Activated T-helper 1 cell treated with anti-CD3 and anti-CD28 coated beads, Interleukin-12 subunit alpha, Interleukin-12 subunit beta, Interleukin-2, Interleukin-4 antibody, amounts not matched to agents 30 ng/mL and 10 ng/mL and 1 ng/mL, durations not matched to agents 14 hours and 24 hours and 36 hours (primary cell): ENCODE measurements at regions of chr11 and their contacts with region 1.

Region 1: GRCh38 chr11:65711785-65712632 is at the start of gene KAT5:
- DNase-seq: peak; percentile 98
- H3K4me3 Mint-ChIP-seq: peak within 1 kb of the TSS; percentile 96
- H3K27ac Mint-ChIP-seq: peak within 1 kb of the TSS; percentile 98
- H3K4me1 Mint-ChIP-seq: peaks cover 29% of the 10 kb centered on the region
- H3K27me3 Mint-ChIP-seq: no peaks in the 10 kb centered on the region
- total RNA-seq, gene KAT5: 68.1 and 75.0 TPM in 2 replicates

Region 2: GRCh38 chr11:65069217-65069616 is 642.8 kb before region 1 on chr11:
- intact Hi-C with region 1: no loop called
- DNase-seq: no peak
- H3K4me3 Mint-ChIP-seq: no peak overlapping the region
- H3K27ac Mint-ChIP-seq: no peak overlapping the region
- H3K4me1 Mint-ChIP-seq: no peaks in the 10 kb centered on the region
- H3K27me3 Mint-ChIP-seq: no peaks in the 10 kb centered on the region

Region 3: GRCh38 chr11:65606876-65607613 is 105.0 kb before region 1 on chr11:
- intact Hi-C with region 1: no loop called
- DNase-seq: no peak
- H3K4me3 Mint-ChIP-seq: no peak overlapping the region
- H3K27ac Mint-ChIP-seq: peak overlapping the region; percentile 34
- H3K4me1 Mint-ChIP-seq: peaks cover 29% of the 10 kb centered on the region
- H3K27me3 Mint-ChIP-seq: no peaks in the 10 kb centered on the region

Region 4: DNA sequence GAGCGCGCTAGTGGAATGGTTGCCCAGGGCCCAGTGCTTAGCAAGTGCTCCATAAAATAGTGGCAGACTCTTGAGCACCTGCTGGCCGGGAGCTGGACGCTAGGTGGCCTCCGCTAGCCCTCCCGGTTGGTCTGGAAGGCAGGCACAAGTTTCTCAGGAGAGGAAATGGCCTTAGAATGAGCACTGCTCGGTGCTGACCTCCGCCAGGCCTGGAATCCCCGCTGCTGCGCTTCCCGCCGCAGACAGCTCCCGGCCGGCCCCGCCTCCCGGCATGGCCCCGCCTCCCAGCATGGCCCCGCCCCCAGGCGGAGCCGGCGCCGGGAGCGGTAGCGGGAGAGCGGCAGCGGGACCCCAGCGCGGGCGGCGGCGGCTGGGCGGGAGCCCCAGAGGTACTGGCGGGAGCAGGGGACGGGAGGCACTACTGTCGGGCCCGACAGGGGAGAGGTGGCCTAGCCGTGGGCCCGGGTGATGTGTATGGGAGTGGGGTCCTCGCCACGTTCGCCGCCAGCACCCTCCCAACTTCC is 74.2 kb before region 1 on chr11 and contains the start of gene SIPA1:
- intact Hi-C with region 1: loop called (anchors 2 kb)
- DNase-seq: peak; percentile 74
- H3K4me3 Mint-ChIP-seq: peak within 1 kb of the TSS; percentile 82
- H3K27ac Mint-ChIP-seq: peak within 1 kb of the TSS; percentile 83
- H3K4me1 Mint-ChIP-seq: peaks cover 40% of the 10 kb centered on the region
- H3K27me3 Mint-ChIP-seq: no peaks in the 10 kb centered on the region
- total RNA-seq, gene SIPA1: 117 and 130 TPM in 2 replicates

Region 5: DNA sequence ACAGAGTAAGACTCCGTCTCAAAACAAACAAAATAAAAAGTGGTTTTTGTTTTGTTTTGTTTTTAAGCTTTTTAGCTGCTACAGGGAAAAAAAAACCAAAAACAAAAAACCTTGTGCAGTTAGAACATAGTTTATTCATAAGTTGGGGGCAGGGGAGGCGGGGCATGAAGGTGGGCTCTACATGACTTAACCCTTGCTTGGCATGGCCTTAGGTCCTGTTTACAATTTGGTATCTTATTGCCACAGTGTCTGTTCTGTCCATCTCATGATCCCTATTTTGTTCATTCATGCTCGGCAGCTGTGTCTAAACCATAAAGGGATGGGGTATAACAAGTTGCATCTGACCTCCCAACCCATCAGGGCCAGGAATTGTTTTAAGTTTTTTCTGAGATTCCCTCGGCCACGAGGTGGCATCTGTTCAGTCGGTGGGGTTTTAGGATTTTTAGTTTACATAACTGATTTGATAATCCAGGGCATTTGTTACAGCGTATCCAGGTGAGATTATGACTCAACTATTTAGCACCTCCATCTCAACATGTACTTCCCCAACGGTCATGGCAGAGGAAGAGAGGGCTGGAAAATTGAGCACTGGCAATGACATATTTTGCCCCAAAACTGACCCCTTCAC is 61.9 kb after region 1 on chr11:
- intact Hi-C with region 1: loop called (anchors 1 kb)
- DNase-seq: no peak
- H3K4me3 Mint-ChIP-seq: no peak overlapping the region
- H3K27ac Mint-ChIP-seq: peak overlapping the region; percentile 18
- H3K4me1 Mint-ChIP-seq: peaks cover 23% of the 10 kb centered on the region
- H3K27me3 Mint-ChIP-seq: no peaks in the 10 kb centered on the region

Region 6: GRCh38 chr11:65779851-65780577 is 68.0 kb after region 1 on chr11:
- intact Hi-C with region 1: loop called (anchors 1 kb)
- DNase-seq: peak; percentile 78
- H3K4me3 Mint-ChIP-seq: peak overlapping the region; percentile 88
- H3K27ac Mint-ChIP-seq: peak overlapping the region; percentile 91
- H3K4me1 Mint-ChIP-seq: peaks cover 27% of the 10 kb centered on the region
- H3K27me3 Mint-ChIP-seq: peaks cover 20% of the 10 kb centered on the region